H1 (cell line): ENCODE measurements at regions of chr9 and their contacts with region 1.

Region 1: DNA sequence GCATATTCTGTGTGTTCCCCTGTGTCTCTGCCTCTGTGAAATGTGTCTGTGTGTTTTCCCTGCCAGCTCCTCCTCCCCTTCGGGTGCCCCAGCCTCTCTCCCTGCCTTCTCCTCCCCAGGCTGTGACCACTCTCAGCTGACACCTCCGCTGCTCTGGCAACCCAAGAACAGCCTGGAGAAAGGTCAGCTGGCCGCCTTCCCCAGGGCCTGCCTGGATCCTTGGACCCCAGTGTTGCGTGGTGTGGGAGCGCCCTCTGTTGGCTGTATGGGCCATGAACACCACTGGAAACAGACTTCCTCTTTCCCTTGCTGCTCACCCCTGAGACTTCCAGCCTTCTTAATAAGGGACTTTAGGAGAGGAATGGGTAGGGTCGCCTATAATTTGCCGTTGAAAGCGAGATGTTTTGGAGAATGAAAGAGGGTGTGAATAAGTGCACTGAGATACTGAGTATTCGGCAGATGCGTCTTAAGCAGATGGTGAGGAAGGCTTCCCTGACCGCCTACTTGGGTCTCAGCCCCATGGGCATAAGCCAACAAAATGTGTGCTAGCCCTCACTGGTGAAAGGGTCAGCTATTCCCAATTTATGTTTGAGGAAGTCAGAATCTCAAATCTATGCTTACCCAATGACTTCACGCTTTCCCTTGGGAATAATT is 114.9 kb upstream of the TRIM32 start:
- DNase-seq: peak; percentile 46 to 91
- H3K4me3 ChIP-seq: no peak overlapping the region
- H3K27ac ChIP-seq: no peak overlapping the region
- H3K4me1 ChIP-seq: peaks cover 0 to 3% (median under 1%) of the 10 kb centered on the region in 4 experiments; a peak in 3 of 7 replicates
- H3K27me3 ChIP-seq: no peaks in the 10 kb centered on the region
- CTCF ChIP-seq: peak; percentile 92 to 96 (median 95)
- EP300 ChIP-seq: no peak
- POLR2A ChIP-seq: no peak
- RAD21 ChIP-seq: peak; percentile 99 to 100

Region 2: DNA sequence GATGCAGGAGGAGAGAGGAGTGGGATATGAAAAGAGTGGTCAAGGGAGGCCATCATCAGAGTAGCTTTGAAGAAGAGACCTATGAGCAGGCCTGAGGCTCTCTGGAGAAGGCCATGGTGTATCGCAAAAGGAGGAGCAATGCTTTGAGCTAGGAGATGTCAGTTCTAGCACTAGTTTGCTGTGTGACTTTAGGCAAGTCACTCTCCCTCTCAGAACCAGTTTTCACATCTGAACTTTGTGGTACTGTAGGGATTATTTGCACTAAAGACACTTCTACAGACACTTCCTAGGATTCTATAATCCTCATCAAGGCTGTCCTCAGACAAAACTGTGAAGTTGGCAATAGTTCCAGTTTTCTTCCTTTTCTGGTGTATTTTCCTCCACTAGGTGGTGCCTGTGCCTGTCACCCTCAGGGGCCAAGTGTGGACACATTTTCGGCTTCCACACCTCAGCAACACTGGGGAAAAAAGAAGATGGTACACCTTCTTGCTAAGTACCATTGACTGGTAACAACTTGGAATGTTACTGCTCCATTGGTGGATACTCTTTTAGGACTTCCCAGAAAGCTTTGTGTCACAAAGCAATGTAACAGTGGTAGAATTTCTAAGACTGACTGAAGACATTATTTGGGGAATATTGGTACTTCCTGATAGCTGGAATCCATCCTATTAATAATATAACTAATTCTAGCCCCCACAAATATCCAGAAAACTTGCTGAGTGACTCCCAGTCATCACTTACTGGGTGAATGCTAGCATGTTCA is 408.7 kb before region 1 on chr9:
- CTCF ChIA-PET with region 1: interaction called, 12 read pairs
- POLR2A ChIA-PET with region 1: no interaction called
- DNase-seq: no peak
- H3K4me3 ChIP-seq: no peak overlapping the region
- H3K27ac ChIP-seq: no peak overlapping the region
- H3K4me1 ChIP-seq: no peaks in the 10 kb centered on the region
- H3K27me3 ChIP-seq: peaks cover 0 to 4% (median 1%) of the 10 kb centered on the region in 4 experiments; a peak in 3 of 7 replicates
- CTCF ChIP-seq: peak; percentile 52 to 69 (median 61)
- EP300 ChIP-seq: no peak
- POLR2A ChIP-seq: no peak
- RAD21 ChIP-seq: peak; percentile 77 to 82

Region 3: DNA sequence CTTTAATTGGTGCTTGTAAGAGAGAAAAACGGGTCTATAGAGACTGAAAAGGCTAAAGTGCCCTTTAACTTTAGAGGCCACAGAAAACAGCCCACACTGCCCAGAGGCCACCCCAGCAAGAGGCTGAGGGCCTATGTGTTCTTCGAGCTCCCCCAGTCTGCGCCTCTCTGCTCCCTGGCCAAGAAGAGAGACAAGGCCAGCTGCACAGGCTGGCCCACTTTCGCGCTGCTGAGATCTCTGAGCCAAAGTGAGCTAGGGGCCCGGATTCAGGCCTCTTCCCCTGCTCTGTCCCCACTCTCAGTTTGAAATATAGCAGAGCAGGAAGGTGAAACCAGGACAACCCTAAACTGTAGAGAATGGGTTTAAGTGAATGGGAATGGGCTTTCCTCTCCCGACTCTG is 17.1 kb before region 1 on chr9:
- CTCF ChIA-PET with region 1: interaction called, 13 read pairs
- POLR2A ChIA-PET with region 1: no interaction called
- DNase-seq: no peak
- H3K4me3 ChIP-seq: no peak overlapping the region
- H3K27ac ChIP-seq: no peak overlapping the region
- H3K4me1 ChIP-seq: no peaks in the 10 kb centered on the region
- H3K27me3 ChIP-seq: no peaks in the 10 kb centered on the region
- CTCF ChIP-seq: no peak
- EP300 ChIP-seq: no peak
- POLR2A ChIP-seq: no peak
- RAD21 ChIP-seq: no peak

Region 4: GRCh38 chr9:116623715-116624114 is 51.5 kb after region 1 on chr9:
- CTCF ChIA-PET with region 1: no interaction called
- POLR2A ChIA-PET with region 1: no interaction called
- DNase-seq: no peak
- H3K4me3 ChIP-seq: no peak overlapping the region
- H3K27ac ChIP-seq: no peak overlapping the region
- H3K4me1 ChIP-seq: peaks cover 0 to 10% (median 4%) of the 10 kb centered on the region in 4 experiments; a peak in 4 of 7 replicates
- H3K27me3 ChIP-seq: no peaks in the 10 kb centered on the region
- CTCF ChIP-seq: no peak
- EP300 ChIP-seq: no peak
- POLR2A ChIP-seq: no peak
- RAD21 ChIP-seq: no peak